Thyroid gland (tissue), 4 donors: ENCODE measurements at regions of chr1 and their contacts with region 1.

Region 1: GRCh38 chr1:75785983-75786853 is at the start of gene RABGGTB:
- DNase-seq: peak; percentile 94
- H3K4me3 ChIP-seq: peak within 1 kb of the TSS; percentile 46 to 77 (median 57)
- H3K27ac ChIP-seq: peak within 1 kb of the TSS; percentile 46 to 73 (median 53)
- H3K4me1 ChIP-seq: peaks cover 30 to 41% of the 10 kb centered on the region in 2 donors
- H3K27me3 ChIP-seq: no peaks in the 10 kb centered on the region
- CTCF ChIP-seq: no peak
- POLR2A ChIP-seq: peak in 1 of 2 donors; percentile 87
- total RNA-seq, gene RABGGTB: 55.6 to 80.1 (median 68.2) TPM

Region 2: GRCh38 chr1:75472971-75473603 is 313.1 kb before region 1 on chr1:
- intact Hi-C with region 1: no loop called
- DNase-seq: no peak
- H3K4me3 ChIP-seq: no peak overlapping the region
- H3K27ac ChIP-seq: no peak overlapping the region
- H3K4me1 ChIP-seq: no peaks in the 10 kb centered on the region
- H3K27me3 ChIP-seq: no peaks in the 10 kb centered on the region
- CTCF ChIP-seq: no peak
- POLR2A ChIP-seq: no peak

Region 3: GRCh38 chr1:75724472-75725022 is 61.7 kb before region 1 on chr1 and contains the start of gene ACADM:
- intact Hi-C with region 1: loop called (anchors 10 kb)
- DNase-seq: peak; percentile 85 to 90
- H3K4me3 ChIP-seq: peak within 1 kb of the TSS; percentile 23 to 85 (median 47)
- H3K27ac ChIP-seq: peak within 1 kb of the TSS; percentile 59 to 96 (median 94)
- H3K4me1 ChIP-seq: peaks cover 4 to 21% of the 10 kb centered on the region in 2 donors
- H3K27me3 ChIP-seq: no peaks in the 10 kb centered on the region
- CTCF ChIP-seq: no peak
- POLR2A ChIP-seq: peak in 1 of 2 donors; percentile 79
- total RNA-seq, gene ACADM: 65.3 to 69.9 (median 68.7) TPM

Region 4: GRCh38 chr1:75838079-75838478 is 51.9 kb after region 1 on chr1:
- intact Hi-C with region 1: no loop called
- DNase-seq: no peak
- H3K4me3 ChIP-seq: no peak overlapping the region
- H3K27ac ChIP-seq: no peak overlapping the region
- H3K4me1 ChIP-seq: no peaks in the 10 kb centered on the region
- H3K27me3 ChIP-seq: no peaks in the 10 kb centered on the region
- CTCF ChIP-seq: no peak
- POLR2A ChIP-seq: no peak

Region 5: GRCh38 chr1:76170513-76170912 is 384.3 kb after region 1 on chr1:
- intact Hi-C with region 1: no loop called
- DNase-seq: no peak
- H3K4me3 ChIP-seq: no peak overlapping the region
- H3K27ac ChIP-seq: no peak overlapping the region
- H3K4me1 ChIP-seq: no peaks in the 10 kb centered on the region
- H3K27me3 ChIP-seq: no peaks in the 10 kb centered on the region
- CTCF ChIP-seq: no peak
- POLR2A ChIP-seq: no peak